Activated CD4-positive, alpha-beta T cell treated with anti-CD3 and anti-CD28 coated beads for 36 hours (primary cell): ENCODE measurements at regions of chr1 and their contacts with region 1.

Region 1: DNA sequence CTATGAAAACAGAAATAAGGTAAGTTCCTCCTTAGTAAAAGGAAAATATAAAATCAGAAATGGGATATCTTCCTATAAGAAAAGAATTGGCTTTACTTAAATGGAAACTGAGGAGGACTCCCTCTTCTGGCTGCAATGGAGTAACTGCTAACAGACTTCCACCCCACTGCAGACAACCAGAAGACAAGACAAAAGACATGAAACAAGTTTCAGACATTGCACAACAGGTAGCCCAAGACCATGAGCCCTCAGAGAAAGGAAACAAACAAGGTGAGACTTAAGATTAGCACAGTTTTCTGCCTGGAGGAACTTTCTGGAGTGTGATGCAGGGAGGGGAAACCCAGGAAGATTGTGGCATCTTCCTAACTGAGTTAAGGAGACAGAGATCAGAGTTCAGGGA is 17.0 kb upstream of the OLFML2B start:
- DNase-seq: no peak
- ATAC-seq: no peak
- H3K4me3 Mint-ChIP-seq: no peak overlapping the region
- H3K27ac Mint-ChIP-seq: no peak overlapping the region
- H3K4me1 Mint-ChIP-seq: peaks cover 2% of the 10 kb centered on the region
- H3K27me3 Mint-ChIP-seq: no peaks in the 10 kb centered on the region

Region 2: DNA sequence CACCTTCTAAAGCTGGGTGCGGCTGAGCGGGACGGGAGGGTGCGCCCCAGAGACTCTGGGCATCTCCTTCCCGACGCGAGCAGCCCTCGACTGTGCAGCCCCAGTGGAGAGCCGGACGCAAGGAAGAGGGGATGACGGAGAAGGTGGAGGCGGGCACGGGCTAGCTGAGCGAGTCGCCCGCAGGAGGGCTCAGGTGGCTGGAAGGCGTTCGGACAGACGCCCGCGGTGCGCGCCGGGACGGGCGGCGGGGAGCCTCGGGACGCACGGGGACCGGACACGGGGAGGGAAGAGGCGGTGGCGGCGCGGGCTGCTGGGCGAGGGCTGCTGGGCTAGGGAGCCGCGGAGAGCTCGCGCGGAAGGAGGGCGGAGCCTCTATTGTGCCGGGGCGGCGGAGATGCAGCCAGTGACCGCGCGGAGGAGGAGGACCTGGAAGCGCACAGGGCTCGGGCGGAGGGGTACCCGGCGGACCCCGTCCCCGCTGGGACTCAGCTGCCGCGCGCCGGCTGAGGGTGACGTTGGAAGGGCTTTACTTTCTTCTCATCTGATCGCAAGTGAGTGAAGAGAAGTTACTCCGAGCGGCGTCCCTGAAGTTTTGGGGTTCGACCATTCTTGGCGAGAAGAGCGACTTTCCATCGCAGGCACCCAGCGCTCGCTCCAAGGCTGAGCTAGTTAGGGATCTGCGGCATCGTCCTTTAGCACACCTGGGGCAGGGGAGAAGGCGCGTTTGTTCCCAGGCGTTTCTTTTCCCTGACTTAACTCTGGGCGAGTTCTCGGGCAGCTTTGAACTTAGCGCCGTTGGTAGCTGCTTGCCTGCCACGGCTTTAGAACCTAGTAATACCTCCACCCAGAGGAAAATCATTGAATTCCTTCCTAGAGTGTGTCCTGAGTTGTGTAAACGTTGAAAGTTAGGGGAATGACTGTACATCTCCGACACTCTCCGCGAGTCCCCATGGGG is 16.9 kb before region 1 on chr1 and contains the start of gene OLFML2B:
- CTCF ChIA-PET with region 1: interaction called, 13 read pairs
- POLR2A ChIA-PET with region 1: no interaction called
- intact Hi-C with region 1: no loop called
- DNase-seq: peak; percentile 70
- ATAC-seq: peak; percentile 91
- H3K4me3 Mint-ChIP-seq: peak within 1 kb of the TSS; percentile 78
- H3K27ac Mint-ChIP-seq: peak within 1 kb of the TSS; percentile 40
- H3K4me1 Mint-ChIP-seq: peaks cover 4% of the 10 kb centered on the region
- H3K27me3 Mint-ChIP-seq: peaks cover 39% of the 10 kb centered on the region
- total RNA-seq, gene OLFML2B: 0.14 to 0.28 TPM